Common myeloid progenitor, CD34-positive (primary cell): ENCODE measurements at regions of chr16 and their contacts with region 1.

Region 1: GRCh38 chr16:66562407-66562806 is 3.8 kb upstream of the CMTM1 start:
- DNase-seq: no peak
- H3K4me3 ChIP-seq: no peak overlapping the region
- H3K27ac ChIP-seq: no peak overlapping the region
- H3K4me1 ChIP-seq: peaks cover 24 to 44% (median 38%) of the 10 kb centered on the region in 4 experiments
- H3K27me3 ChIP-seq: no peaks in the 10 kb centered on the region

Region 2: DNA sequence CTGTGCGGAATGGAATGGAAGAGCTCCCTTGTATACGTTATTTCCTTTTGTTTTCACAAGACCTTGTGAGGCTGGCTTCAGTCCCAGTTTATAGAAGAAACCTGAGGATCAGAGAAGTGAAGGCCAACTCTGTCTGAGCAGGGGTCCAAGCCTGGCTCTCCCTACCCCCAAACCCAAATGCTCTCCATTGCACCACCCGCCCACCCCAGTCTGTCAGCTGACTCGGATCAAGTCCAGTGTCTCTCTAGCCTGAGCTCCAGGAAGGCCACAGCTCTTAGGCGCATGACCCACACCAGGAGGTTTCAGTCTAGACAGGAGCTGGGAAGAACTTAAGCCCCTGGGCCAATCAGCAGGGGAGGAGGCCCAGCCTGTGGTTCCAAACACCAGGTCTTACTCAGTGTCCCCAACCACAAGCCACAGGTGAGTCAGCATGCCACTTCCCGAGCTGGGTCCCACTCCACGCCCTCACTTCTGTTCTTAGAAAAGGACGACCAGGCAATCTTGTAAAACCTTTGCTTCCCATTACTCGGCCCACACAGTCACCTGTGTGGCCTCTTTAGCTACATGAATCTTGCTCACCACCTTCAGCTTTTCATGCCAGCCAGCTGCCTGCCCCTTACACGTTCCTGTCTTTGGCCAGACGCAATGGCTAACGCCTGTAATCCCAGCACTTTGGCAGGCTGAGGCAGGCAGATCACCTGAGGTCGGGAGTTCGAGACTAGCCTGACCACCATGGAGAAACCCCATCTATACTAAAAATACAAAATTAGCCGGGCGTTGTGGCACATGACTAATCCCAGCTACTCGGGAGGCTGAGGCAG is 40.2 kb before region 1 on chr16:
- CTCF ChIA-PET with region 1: interaction called, 10 read pairs
- POLR2A ChIA-PET with region 1: interaction called, 4 read pairs
- DNase-seq: peak; percentile 87 to 96 (median 94)
- H3K4me3 ChIP-seq: peak overlapping the region in 4 of 7 experiments; percentile 2 to 41 (median 31)
- H3K27ac ChIP-seq: peak overlapping the region in 1 of 2 experiments; percentile 68
- H3K4me1 ChIP-seq: peaks cover 50 to 96% (median 93%) of the 10 kb centered on the region in 4 experiments
- H3K27me3 ChIP-seq: no peaks in the 10 kb centered on the region

Region 3: DNA sequence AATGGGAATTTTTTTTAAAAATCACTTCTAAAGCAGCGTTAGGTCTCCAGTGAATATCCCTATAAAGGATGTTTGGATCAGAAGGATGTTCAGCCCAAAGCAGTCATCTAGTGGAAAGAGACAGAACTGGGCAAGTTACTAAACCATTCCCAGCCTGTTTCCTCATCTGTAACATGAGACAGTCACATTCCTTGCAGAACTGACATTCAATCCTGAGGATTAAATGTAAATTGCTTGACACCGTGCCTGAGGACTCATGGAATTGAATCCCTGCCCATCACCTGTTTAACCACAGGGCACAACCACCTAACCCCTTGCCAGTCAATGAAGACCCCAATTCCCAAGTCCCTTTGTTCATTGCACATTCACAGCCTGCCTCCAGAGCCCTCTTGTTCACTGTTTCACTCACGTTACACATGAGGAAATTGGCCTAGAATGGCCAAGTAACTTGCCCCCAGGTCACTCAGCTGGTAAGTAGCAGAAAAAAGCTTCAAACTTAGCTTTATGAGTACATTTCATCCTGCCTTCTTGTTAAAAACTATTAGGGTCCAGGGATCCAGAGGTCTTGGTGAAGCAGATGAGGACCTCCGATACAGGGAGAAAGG is 18.3 kb after region 1 on chr16:
- CTCF ChIA-PET with region 1: interaction called, 82 read pairs
- POLR2A ChIA-PET with region 1: interaction called, 3 read pairs
- DNase-seq: no peak
- H3K4me3 ChIP-seq: no peak overlapping the region
- H3K27ac ChIP-seq: no peak overlapping the region
- H3K4me1 ChIP-seq: peaks cover 8 to 36% (median 29%) of the 10 kb centered on the region in 4 experiments
- H3K27me3 ChIP-seq: peaks cover 0 to 1% (median 0%) of the 10 kb centered on the region in 5 experiments

Region 4: GRCh38 chr16:66598111-66598510 is 35.7 kb after region 1 on chr16:
- CTCF ChIA-PET with region 1: interaction called, 10 read pairs
- POLR2A ChIA-PET with region 1: no interaction called
- DNase-seq: peak in 2 of 3 donors; percentile 49 to 60
- H3K4me3 ChIP-seq: no peak overlapping the region
- H3K27ac ChIP-seq: no peak overlapping the region
- H3K4me1 ChIP-seq: peaks cover 0 to 7% (median 1%) of the 10 kb centered on the region in 4 experiments
- H3K27me3 ChIP-seq: no peaks in the 10 kb centered on the region

Region 5: DNA sequence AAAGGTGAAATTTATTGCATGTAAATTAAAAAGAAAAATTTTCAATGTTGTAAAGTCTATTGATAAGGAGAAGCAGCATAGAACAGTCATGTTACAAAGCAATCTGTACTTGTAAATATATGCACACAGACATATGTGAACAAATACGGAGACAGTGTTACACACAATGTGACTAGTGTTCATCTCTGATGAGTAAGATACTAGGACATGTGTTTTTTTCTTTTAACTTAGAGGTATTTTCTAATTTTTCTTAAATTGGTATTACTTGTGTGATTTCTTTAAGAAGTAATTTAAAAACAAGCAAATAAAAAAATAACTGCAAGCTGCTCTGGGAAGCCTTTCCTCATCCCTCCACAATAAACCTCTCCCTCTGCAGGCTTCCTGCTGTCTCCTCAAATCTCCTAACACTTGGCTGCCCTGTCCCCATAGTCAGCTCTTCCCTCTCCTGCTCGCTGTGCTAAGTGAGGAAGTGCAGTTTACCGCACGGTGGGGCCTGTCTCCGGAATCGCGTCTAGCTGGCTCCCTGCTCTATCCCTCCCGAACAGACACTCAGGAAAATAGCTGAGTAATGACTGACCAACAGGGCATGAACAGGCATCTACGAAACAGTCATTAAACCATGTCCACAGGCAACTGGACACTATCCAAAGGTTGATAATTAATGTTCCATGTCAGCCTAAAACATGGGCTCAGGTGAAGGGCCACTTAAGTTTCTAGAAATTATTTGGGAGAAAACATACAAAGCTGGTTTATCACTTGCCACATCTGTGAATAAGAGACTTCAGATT is 98.2 kb after region 1 on chr16:
- CTCF ChIA-PET with region 1: no interaction called
- POLR2A ChIA-PET with region 1: no interaction called
- DNase-seq: peak; percentile 41 to 65 (median 52)
- H3K4me3 ChIP-seq: peak overlapping the region in 3 of 7 experiments; percentile 37 to 56 (median 41)
- H3K27ac ChIP-seq: peak overlapping the region; percentile 30 to 70
- H3K4me1 ChIP-seq: peaks cover 4 to 47% (median 31%) of the 10 kb centered on the region in 4 experiments
- H3K27me3 ChIP-seq: no peaks in the 10 kb centered on the region